Heart right ventricle (tissue), 16 donors: ENCODE measurements at regions of chr5 and their contacts with region 1.

Region 1: GRCh38 chr5:160260881-160261815 is 31.8 kb downstream of the FABP6 start:
- DNase-seq: no peak
- ATAC-seq: peak; percentile 49 to 92 (median 78)
- H3K4me3 ChIP-seq: no peak overlapping the region
- H3K27ac ChIP-seq: peak overlapping the region in 2 of 10 donors; percentile 41 to 54
- H3K4me1 ChIP-seq: peaks cover 8 to 35% (median 31%) of the 10 kb centered on the region in 9 donors
- H3K27me3 ChIP-seq: no peaks in the 10 kb centered on the region
- CTCF ChIP-seq: no peak

Region 2: DNA sequence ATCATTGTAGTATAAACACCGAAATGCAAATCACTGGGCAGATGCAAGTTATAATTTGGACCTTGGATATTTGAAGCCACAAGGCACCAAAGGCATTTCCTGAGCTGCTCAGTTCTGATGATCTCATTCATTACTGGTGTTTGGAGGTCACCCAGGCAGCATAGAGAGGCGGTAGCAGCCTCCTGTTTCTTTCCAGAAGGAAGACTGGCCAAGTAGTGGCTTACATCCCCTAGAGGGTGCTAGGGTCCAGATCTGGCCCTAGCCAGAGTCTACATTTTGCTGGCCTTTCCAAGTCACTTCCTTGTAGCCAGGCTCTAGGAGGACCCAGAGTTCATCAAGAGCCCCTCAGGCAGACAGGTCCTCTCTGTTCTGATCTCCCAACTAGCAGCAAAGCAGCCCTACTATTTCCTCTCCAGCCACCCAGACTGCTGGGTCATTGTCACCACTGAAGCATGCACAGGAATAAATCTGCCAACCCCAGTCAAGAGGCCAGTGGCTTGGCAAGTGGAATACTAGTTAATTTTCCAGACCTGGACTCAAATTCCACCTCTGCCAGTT is 285.6 kb before region 1 on chr5:
- intact Hi-C with region 1: no loop called
- DNase-seq: peak in 1 of 2 donors; percentile 27
- ATAC-seq: peak; percentile 75 to 91 (median 80)
- H3K4me3 ChIP-seq: no peak overlapping the region
- H3K27ac ChIP-seq: peak overlapping the region in 3 of 10 donors; percentile 9 to 48 (median 40)
- H3K4me1 ChIP-seq: peaks cover 0 to 13% (median 9%) of the 10 kb centered on the region in 9 donors
- H3K27me3 ChIP-seq: peaks cover 0 to 42% (median 25%) of the 10 kb centered on the region in 7 donors
- CTCF ChIP-seq: peak in 5 of 9 donors; percentile 21 to 37 (median 32)

Region 3: DNA sequence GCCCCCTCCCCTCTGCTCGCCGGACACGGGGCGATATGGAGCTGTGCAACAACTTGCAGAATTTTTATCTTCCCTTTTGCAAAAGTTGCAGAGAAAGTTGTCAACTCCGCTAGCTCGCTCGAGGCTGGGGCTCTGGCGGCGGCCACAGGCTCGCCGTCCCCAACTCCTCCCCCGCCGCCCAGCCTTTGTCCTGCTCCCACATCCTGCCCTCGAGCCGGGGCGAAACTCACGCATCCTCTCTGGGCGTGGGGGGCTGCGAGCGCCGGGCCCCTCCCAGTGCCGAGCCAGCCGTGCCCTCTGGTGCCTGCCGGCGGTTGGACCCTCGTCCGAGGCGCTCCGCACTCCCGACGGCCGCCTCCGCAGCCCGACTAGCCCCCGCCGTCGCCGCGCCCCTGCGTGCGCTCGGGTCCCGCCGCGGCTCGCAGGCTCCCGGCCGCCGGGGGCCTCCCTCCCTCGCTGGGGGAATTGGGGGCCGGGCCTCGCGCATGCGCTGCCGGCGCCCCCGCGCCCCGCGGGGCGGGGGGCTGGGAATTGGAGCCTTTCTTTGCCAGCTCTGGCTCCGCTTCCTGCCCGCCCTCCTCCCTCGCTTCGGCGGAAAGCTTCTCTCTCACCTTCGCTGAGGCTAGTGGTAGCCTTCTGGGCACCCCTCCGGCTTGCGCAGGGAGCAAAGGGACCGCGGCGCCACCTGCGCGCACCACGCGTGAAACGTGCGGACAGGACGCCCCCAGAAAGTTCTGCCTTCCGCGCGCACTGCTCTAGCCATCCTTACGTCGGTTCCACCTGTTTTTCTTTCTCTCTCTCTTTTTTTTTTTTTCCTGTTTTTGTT is 51.2 kb after region 1 on chr5 and contains the start of gene CCNJL:
- intact Hi-C with region 1: loop called in 4 of 10 experiments (anchors 5 to 10 kb)
- DNase-seq: peak; percentile 63 to 70
- ATAC-seq: peak; percentile 72 to 85 (median 80)
- H3K4me3 ChIP-seq: peak within 1 kb of the TSS; percentile 58 to 96 (median 82)
- H3K27ac ChIP-seq: peak within 1 kb of the TSS in 9 of 10 donors; percentile 76 to 92 (median 87)
- H3K4me1 ChIP-seq: peaks cover 0 to 33% (median 12%) of the 10 kb centered on the region in 9 donors
- H3K27me3 ChIP-seq: peaks cover 0 to 45% (median 0%) of the 10 kb centered on the region in 7 donors
- CTCF ChIP-seq: no peak
- total RNA-seq, gene CCNJL: 4.5 to 20.8 (median 7.0) TPM

Region 4: GRCh38 chr5:160342403-160342941 is 81.3 kb after region 1 on chr5:
- intact Hi-C with region 1: loop called in 1 of 10 experiments (anchors 10 kb)
- DNase-seq: no peak
- ATAC-seq: peak in 2 of 8 donors; percentile 52 to 56
- H3K4me3 ChIP-seq: no peak overlapping the region
- H3K27ac ChIP-seq: no peak overlapping the region
- H3K4me1 ChIP-seq: peaks cover 0 to 20% (median 0%) of the 10 kb centered on the region in 9 donors
- H3K27me3 ChIP-seq: no peaks in the 10 kb centered on the region
- CTCF ChIP-seq: no peak